AG04450 (cell line): ENCODE measurements at regions of chr12 and their contacts with region 1.

Region 1: DNA sequence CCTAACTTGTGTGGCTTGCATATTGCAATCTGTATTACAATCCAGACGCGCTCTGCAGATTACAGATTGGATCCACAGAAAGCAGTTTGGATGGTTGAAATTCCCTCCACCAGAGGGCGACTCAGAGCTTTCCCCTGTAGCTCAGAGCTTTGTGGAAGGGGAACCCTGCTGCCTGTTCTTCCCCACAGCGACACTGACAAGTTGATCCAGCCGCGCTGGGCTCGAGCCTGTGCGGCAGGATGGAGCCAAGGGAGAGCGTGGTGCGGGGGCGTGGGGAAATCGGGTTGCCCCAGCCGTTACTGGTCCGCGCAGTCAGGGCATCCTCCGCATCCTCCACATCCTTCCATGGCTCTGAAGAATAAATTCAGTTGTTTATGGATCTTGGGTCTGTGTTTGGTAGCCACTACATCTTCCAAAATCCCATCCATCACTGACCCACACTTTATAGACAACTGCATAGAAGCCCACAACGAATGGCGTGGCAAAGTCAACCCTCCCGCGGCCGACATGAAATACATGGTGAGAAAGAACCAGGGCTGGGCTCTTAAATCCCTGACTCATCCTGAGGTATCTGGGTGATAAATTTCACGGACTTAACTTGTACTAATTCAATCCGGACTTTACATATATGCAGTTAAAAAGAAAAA is at the start of gene GLIPR1L1:
- DNase-seq: peak; percentile 82
- H3K4me3 ChIP-seq: peak within 1 kb of the TSS; percentile 65
- H3K27ac ChIP-seq: peak within 1 kb of the TSS; percentile 34
- H3K27me3 ChIP-seq: no peaks in the 10 kb centered on the region
- CTCF ChIP-seq: peak; percentile 89
- polyA plus RNA-seq, gene GLIPR1L1: not detected in 2 replicates

Region 2: DNA sequence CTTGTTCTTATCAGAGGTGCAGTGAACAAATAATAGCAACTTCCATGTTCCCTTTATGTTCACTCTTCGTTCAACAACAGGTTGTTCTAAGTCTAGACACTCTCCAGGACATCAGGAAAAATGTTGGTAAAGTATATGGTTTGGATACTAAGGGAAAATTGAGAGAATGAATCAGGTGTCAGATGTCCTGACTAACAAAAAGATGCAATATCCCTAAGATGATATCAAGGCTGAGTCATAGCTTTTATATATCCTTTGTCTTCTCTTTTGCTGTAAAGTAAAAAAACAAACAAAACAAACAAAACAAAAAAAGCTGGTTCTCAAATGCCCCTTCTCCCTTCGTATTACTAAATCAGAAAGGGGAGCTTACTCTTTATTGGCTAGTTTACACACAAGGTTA is 11.0 kb after region 1 on chr12:
- CTCF ChIA-PET with region 1: interaction called, 10 read pairs
- POLR2A ChIA-PET with region 1: no interaction called
- DNase-seq: no peak
- H3K4me3 ChIP-seq: no peak overlapping the region
- H3K27ac ChIP-seq: no peak overlapping the region
- H3K27me3 ChIP-seq: no peaks in the 10 kb centered on the region
- CTCF ChIP-seq: no peak

Region 3: DNA sequence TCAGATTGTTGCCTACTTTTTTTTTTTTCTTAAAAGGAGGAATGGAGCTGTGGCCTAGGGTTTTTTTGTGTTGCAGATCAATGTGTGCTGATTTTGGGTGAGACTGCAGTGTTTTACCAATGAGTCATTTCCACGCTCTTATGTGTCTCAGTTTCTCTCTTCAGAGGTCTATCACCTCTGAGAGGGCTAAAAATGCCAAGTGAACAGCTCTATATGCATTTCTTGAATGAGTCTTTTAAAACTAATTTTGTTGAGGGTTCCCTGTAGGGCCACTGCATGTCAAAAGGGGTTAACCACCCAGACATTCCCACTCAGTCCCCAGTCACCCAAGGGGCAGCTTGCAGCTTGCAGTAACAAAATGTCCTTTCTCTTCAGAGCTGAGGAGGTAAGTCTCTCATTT is 32.1 kb after region 1 on chr12:
- CTCF ChIA-PET with region 1: interaction called, 14 read pairs
- POLR2A ChIA-PET with region 1: no interaction called
- DNase-seq: no peak
- H3K4me3 ChIP-seq: no peak overlapping the region
- H3K27ac ChIP-seq: no peak overlapping the region
- H3K27me3 ChIP-seq: no peaks in the 10 kb centered on the region
- CTCF ChIP-seq: no peak

Region 4: DNA sequence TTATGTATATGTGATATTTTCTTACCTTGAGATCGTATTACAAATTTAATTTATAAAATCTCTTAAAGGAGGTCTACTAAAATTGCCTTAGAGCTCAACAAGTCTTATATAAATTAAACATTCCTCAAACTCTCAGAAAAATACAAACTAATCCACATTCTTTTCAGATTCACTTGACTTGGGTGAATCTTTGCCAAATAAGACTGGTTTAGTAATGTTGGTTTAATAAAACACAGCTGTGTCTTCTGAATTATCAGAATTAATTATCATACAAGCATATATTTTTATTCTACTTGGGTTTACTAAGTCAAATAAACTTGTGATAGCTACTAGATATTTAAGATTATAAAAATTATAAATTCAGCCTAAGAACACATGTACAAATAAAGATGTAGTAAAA is 69.7 kb after region 1 on chr12:
- CTCF ChIA-PET with region 1: no interaction called
- POLR2A ChIA-PET with region 1: no interaction called
- DNase-seq: no peak
- H3K4me3 ChIP-seq: no peak overlapping the region
- H3K27ac ChIP-seq: no peak overlapping the region
- H3K27me3 ChIP-seq: no peaks in the 10 kb centered on the region
- CTCF ChIP-seq: no peak

Region 5: GRCh38 chr12:75480469-75480949 is 146.0 kb after region 1 on chr12 and contains the start of gene GLIPR1:
- CTCF ChIA-PET with region 1: interaction called, 47 read pairs
- POLR2A ChIA-PET with region 1: interaction called, 5 read pairs
- DNase-seq: peak; percentile 97
- H3K4me3 ChIP-seq: peak within 1 kb of the TSS; percentile 73
- H3K27ac ChIP-seq: peak within 1 kb of the TSS; percentile 89
- H3K27me3 ChIP-seq: no peaks in the 10 kb centered on the region
- CTCF ChIP-seq: no peak
- polyA plus RNA-seq, gene GLIPR1: 299 and 335 TPM in 2 replicates

Region 6: DNA sequence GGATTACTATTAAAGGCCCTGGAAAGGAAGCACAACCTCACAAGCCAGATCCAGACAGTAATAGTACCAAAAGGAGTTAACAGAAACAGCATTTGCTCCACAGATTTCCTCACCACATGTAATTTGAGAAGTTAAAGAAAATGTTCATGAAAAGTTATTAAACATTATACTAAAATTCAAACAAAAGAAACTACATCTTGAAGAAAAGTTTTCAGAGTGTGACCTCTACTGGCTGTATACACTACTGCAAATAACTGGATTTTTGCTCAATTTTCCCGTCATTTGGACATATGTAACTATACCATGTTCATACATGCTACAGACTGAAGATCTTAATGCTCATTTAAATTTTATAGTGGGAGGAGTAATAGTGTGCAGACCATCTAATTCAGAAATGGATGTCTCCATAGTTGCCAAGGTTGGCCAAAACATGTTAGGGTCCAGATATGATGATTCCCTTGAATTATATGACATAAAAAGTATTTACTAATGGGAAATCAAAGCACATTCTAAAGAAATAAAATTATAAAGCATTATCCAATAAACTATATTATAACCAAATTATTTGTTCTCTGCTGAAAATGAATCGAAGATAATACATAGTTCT is 171.3 kb after region 1 on chr12:
- CTCF ChIA-PET with region 1: interaction called, 20 read pairs
- POLR2A ChIA-PET with region 1: no interaction called
- DNase-seq: no peak
- H3K4me3 ChIP-seq: no peak overlapping the region
- H3K27ac ChIP-seq: no peak overlapping the region
- H3K27me3 ChIP-seq: no peaks in the 10 kb centered on the region
- CTCF ChIP-seq: peak; percentile 74